ENCODE measurements at regions of chr2 and their contacts with region 1.

Region 1: DNA sequence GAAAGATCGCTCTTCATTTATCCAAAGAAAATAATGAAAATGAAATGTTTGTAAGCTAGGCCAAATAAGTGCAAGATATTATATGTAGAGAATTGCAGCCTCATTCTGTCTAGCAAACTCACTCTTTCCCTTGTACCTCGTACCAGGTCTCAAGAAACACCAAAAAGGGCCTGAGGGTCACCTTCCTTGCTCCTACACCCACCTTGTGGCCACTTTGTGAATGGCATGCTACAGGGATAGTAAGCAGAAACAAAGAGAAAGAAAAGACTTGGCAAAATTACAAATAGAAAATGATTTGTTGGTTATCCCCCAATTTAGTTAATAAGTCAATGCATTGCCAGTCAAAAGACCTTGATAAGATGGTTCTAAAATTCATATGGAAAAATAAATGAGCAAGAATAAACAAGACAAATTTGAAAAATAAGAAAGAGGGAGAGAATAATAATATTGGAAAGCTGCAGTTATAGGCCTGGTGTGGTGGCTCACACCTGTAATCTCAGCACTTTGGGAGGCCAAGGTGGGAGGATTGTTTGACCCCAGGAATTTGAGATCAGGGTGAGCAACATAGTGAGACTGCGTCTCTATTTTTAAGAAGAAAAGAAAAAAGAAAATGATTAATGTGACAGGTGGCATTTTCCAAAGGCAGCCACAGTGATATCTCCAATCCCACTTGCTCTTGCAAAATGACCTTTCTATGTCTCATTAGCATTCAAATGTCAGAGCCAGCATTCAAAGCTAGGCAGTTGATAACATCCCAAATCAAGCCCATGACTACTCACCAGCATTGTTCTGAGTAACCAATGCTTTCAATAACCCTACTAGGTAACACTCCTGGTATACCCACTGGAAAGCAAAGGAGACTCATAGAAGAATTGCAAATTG is 38.8 kb upstream of the BMP10 start:
- DNase-seq: peak; percentile 81
- H3K4me3 ChIP-seq: no peak overlapping the region
- H3K27ac ChIP-seq: no peak overlapping the region
- H3K4me1 ChIP-seq: peaks cover 11 to 17% (median 13%) of the 10 kb centered on the region in 4 donors
- H3K27me3 ChIP-seq: no peaks in the 10 kb centered on the region
- CTCF ChIP-seq: peak; percentile 88 to 95 (median 91)
- EP300 ChIP-seq: no peak
- POLR2A ChIP-seq: no peak

Region 2: DNA sequence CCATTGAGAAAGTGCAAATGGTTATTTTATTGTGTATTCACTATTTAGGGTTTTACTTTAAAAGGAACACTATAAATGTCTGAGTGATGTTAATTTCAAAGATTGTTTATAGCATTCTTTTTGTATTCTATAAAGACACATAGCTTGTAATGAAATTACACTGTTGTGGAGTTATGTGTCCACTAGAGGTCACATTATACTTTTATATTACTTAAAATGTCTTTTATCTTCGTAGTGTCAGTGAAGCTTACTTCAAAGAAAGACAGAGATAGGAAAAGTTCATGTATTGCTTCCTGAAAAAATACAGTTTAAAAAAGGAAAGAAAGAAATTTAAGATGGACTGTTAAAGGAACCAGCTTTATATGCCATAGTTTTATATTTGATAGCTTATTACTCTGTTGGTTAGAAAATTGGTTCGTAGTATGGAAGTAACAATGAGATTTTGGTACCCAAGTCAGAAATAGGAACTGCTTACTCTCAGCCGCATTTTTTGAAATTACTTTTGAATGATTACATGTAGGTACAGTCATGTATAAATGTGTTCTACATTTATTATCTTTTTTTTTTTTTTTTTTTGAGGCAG is 422.2 kb before region 1 on chr2:
- in situ Hi-C with region 1: loop called in 3 of 4 experiments (anchors 25 kb)
- intact Hi-C with region 1: no loop called
- DNase-seq: no peak
- H3K4me3 ChIP-seq: no peak overlapping the region
- H3K27ac ChIP-seq: no peak overlapping the region
- H3K4me1 ChIP-seq: no peaks in the 10 kb centered on the region
- H3K27me3 ChIP-seq: no peaks in the 10 kb centered on the region
- CTCF ChIP-seq: peak; percentile 33 to 58 (median 47)
- EP300 ChIP-seq: no peak
- POLR2A ChIP-seq: no peak

Region 3: DNA sequence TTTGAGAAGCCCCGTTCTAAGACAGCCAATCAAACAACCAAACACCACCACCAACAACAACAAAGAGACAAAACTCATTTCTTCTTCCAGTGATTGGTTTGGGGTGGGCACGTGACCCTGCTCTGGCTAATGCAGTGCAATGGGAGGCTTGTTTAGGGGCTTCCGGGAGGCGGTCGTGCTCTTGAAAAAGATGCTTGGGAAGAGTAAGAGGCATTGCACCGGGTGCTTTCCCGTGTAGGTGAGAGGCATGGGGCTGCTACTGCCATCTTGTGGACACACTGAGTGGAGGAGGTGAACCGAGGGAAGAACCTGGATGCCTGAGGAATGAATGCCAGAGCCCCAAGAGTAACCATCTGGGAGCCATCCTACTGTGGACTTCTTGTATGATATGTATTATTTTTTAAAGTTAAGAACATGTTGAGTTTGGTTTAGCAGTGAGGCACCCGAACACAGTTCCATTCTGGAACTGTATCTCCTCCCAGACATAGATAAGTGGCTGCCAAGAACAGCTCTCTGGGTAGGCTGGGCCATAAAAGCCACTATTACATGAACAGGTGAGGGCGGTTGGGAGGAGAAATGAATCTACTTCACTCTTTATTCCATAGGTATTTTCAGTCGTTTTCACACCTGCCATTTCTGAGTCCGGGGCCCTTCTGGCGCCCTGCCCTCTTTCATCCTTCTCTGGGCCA is 194.5 kb before region 1 on chr2:
- in situ Hi-C with region 1: loop called in 1 of 4 experiments (anchors 25 kb)
- intact Hi-C with region 1: no loop called
- DNase-seq: peak; percentile 69
- H3K4me3 ChIP-seq: no peak overlapping the region
- H3K27ac ChIP-seq: peak overlapping the region in 2 of 4 donors; percentile 35 to 38
- H3K4me1 ChIP-seq: peaks cover 3 to 9% (median 5%) of the 10 kb centered on the region in 4 donors
- H3K27me3 ChIP-seq: no peaks in the 10 kb centered on the region
- CTCF ChIP-seq: peak; percentile 54 to 69 (median 60)
- EP300 ChIP-seq: no peak
- POLR2A ChIP-seq: no peak

Region 4: DNA sequence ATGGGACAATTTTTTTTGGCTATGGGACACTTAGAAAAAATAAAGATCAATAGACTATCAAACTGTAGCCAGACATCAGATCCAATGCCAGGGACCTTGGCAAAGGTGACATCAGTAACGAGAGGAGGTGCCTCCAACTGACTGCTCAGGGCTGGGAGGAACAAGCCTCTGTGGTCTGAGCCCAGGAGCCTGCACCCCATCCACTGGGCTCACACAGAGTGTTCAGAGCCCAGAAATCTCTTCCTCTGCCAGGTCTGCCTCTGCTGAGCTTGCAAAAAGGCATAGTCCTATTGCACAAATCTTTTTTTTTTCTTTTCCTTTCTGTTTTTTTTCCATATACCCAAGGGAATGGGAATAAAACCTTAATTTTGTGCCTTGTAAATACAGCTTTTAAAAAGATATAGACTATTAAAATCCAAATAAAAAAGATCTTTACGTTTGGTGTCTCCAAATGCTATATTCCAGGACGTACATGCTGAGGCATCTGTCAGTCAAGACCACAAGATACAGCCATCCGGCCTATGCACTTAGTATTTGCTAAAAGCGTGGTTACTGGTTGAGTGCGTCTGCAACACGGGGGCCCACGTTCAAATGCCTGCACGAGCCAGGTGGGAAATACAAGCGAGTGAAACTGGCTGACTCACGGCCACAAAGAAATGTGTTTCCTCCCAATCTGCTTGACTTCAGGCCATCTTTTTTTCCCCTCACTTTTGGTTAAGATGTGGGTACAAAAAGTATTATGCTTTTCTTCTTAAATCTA is 183.2 kb before region 1 on chr2:
- in situ Hi-C with region 1: loop called in 2 of 4 experiments (anchors 25 kb)
- intact Hi-C with region 1: no loop called
- DNase-seq: peak; percentile 70
- H3K4me3 ChIP-seq: no peak overlapping the region
- H3K27ac ChIP-seq: peak overlapping the region in 3 of 4 donors; percentile 28 to 63 (median 31)
- H3K4me1 ChIP-seq: peaks cover 0 to 9% (median 3%) of the 10 kb centered on the region in 4 donors
- H3K27me3 ChIP-seq: no peaks in the 10 kb centered on the region
- CTCF ChIP-seq: no peak
- EP300 ChIP-seq: no peak
- POLR2A ChIP-seq: no peak

Region 5: DNA sequence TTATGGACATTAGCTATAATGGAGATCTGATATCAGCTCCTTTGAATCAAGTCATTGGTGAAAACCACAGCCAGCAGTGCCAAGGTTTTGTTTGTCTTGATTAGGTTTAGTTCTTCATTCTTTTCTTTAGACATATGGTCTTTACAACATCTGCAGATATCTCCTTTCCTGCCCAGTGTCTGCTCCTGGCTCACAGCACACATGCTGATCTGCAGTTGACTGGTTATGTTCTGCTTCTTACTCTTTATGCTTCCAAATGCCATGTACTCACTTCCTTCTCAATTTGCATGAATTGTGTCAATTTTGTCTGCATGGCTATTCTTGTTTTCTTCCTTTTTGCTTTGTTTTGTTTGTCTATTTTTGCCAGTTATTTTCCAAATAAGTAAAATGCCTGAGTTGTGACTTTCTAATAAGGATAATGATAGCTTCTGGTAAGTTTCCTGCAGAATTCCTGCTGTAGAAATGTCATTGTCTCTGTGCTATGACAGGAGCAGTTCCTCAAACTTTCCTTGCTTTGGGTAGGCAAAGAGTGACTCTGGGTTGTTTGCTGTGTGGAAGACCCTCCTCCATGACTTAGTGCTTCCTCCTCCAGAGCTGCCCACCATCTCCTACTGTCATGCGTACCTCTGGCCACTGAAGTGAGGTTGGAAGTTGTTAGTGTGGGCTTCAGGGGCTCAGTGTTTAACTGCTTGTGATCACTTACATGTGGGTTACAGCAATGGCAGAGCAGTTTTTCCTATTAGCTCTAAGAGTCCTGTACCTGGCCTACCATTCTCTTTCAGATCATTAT is 167.2 kb before region 1 on chr2:
- in situ Hi-C with region 1: loop called in 2 of 4 experiments (anchors 10 to 25 kb)
- intact Hi-C with region 1: no loop called
- DNase-seq: no peak
- H3K4me3 ChIP-seq: no peak overlapping the region
- H3K27ac ChIP-seq: peak overlapping the region; percentile 28 to 53 (median 49)
- H3K4me1 ChIP-seq: peaks cover 0 to 13% (median 4%) of the 10 kb centered on the region in 4 donors
- H3K27me3 ChIP-seq: no peaks in the 10 kb centered on the region
- CTCF ChIP-seq: no peak
- EP300 ChIP-seq: no peak
- POLR2A ChIP-seq: no peak

Region 6: DNA sequence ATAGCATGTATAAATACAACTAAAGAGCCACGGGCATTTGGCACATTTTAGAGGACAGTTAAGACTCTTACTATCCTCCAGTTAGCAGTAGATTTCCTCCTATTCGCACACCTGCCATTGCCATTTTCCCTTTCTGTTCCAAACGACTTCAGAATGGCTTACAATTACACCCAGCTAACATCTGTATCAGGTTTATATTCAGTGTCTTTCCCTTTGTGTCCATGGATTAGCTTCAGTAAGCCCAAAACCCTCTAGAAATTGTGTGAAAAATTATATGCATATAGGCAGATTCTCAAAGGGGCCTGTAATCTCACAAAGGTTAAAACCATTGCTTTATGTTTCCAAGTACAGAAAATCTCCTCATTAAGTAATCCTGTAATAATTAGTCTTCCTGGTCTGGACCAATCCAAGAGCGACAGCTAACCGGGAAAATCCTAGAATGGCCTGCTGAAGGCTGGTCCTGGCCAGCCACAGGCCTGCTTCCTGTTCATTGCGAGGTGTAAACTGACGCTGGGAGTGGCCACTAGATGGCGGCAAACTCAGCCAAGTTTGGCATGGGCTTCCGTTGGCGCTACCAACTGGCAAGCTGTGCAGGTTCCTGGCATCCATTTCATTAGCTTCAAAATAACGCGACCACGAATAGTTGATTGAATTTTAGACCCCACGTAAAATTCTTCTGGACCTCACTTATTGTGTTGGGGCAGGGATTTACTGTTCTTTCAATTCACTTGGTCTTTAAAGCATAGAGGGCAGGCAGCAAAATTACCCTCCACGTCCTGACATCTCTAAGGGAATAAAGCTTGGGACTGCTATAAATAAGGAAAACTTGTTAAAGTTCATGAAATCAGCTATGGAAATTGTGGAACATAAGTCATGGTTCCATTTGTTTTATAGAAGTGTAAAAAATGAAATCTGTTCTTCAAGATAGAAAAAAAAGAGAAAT is 158.4 kb before region 1 on chr2:
- in situ Hi-C with region 1: loop called in 3 of 4 experiments (anchors 5 to 25 kb)
- intact Hi-C with region 1: loop called (anchors 5 kb)
- DNase-seq: peak; percentile 95
- H3K4me3 ChIP-seq: no peak overlapping the region
- H3K27ac ChIP-seq: peak overlapping the region in 1 of 4 donors; percentile 19
- H3K4me1 ChIP-seq: peaks cover 0 to 36% (median 5%) of the 10 kb centered on the region in 4 donors
- H3K27me3 ChIP-seq: no peaks in the 10 kb centered on the region
- CTCF ChIP-seq: peak; percentile 90 to 95 (median 93)
- EP300 ChIP-seq: no peak
- POLR2A ChIP-seq: no peak

Measured in transverse colon (tissue), 4 donors.